ENCODE measurements at regions of chr2 and their contacts with region 1.

Region 1: DNA sequence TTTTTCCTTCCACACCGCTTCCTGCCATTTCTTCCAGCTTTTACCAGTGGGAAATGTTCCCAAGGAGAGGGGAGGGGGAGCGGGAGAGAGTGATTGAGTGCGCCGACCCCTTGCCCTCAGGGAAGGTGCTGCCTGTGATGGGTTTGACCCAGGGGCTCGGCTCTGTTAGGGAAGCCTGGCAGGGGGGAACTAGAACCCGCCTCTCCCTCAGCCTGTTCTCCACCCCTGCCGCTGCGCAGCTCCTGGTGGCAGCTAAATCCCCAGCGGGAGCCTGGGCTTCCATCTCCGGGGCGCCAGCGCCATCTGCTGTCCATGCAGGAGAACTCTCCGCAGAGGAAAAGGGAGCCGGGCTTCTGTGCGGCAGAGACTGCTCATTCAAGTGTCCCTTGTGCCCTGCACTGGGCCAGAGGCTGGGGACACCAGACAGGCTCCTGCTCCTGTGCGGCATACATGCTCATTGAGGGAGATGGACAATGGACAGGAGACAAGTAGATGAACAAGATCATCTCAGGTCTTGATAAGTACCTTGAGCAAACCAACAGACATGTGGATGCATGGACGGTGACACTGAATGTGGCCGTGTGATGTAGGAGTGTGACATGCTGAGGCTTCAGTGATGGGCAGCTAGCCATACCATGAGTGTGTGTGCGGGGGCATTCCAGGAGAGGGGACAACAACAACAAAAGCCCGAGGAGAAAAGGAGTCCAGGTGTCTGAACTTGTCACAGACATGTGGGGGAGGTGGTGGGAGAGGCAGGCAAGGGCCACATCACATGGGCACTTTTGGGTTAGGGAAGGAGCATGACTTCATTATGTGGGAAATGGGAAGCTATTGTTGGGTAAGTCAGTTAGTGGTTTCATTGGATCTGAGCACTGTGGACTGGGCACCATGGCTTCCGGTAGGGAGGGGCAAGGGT is 13.3 kb downstream of the CHPF start:
- DNase-seq: peak; percentile 84
- ATAC-seq: peak; percentile 91
- H3K4me3 ChIP-seq: no peak overlapping the region
- H3K4me3 Mint-ChIP-seq: no peak overlapping the region
- H3K27ac ChIP-seq: no peak overlapping the region
- H3K27ac Mint-ChIP-seq: no peak overlapping the region
- H3K4me1 ChIP-seq: peaks cover 4 to 5% of the 10 kb centered on the region in 2 donors
- H3K4me1 Mint-ChIP-seq: peaks cover 3% of the 10 kb centered on the region
- H3K27me3 ChIP-seq: peaks cover 0 to 53% (median 18%) of the 10 kb centered on the region in 4 experiments
- H3K27me3 Mint-ChIP-seq: peaks cover 64% of the 10 kb centered on the region
- CTCF ChIP-seq: peak; percentile 98

Region 2: DNA sequence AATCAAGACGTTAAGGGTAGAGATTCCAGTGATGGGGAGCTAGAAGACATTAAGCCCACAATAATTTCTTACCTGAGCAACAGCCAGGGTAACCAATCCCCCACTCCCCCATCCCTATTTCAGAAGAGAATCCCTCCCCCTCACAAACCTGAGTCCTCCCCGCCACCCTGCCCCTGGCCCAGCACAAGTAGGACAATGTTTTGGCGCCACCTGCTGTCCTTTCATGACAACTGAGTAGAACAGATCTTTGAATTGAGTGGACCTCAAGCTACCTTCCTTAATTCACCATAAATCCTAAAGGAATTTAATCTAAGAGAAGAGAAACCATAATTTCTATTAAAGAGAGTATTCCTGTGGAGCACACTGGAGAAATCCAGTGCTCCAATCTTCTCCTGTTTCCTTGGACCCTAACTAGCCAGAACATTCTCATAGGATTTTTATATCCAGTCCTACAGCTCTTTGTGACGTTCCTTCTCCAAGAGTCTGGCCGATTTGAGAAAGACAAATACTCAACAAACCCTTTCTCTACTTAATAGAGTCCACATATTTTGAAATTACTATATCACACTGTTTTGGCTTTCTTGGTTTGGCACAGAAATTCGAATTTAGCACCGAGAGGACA is 410.8 kb before region 1 on chr2:
- CTCF ChIA-PET with region 1: no interaction called
- POLR2A ChIA-PET with region 1: no interaction called
- intact Hi-C with region 1: no loop called
- DNase-seq: peak; percentile 61
- ATAC-seq: no peak
- H3K4me3 ChIP-seq: no peak overlapping the region
- H3K4me3 Mint-ChIP-seq: no peak overlapping the region
- H3K27ac ChIP-seq: no peak overlapping the region
- H3K27ac Mint-ChIP-seq: no peak overlapping the region
- H3K4me1 ChIP-seq: no peaks in the 10 kb centered on the region
- H3K4me1 Mint-ChIP-seq: peaks cover 2% of the 10 kb centered on the region
- H3K27me3 ChIP-seq: no peaks in the 10 kb centered on the region
- H3K27me3 Mint-ChIP-seq: no peaks in the 10 kb centered on the region
- CTCF ChIP-seq: peak; percentile 74

Region 3: DNA sequence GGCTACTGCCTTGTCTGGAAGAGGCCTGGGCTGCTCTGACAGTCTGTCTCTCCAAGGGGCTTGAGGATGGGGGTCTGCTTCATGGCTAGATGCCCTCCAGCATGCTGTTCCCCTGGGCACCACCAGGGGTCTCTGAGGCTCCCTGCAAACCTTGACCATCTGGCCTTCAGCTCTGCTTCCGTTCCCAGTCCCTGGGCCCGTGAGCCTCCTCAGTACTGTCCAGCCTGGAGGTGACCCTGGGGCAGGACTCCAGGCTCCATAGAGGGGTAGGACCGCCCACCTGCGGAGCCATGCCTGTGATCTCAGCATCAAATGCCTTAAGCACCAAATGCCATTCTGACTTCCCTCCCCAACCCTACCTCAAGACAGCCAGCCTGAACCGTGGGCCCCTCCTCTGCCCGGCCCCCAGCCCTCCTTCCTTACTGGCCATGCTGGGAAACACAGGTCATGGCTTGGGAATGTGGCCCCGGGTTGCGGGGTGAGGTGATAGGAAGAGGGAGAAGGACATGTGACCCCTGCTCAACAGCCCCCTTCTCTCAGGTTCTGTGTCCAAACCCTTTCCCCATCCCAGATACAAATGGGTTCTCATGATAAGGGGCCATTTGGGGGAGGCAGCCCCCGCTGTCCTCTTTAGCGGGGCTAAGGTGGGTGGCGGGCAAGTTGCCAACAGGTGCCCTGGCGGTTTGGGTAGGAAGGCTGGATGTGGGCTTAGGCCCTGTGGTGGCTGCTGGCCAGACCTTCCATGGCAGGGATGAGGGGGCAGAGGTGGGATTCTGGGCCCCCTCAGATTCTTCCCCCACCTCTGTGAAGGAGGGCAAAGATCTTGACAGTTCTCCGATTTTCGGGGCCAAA is 70.6 kb before region 1 on chr2:
- CTCF ChIA-PET with region 1: interaction called, 146 read pairs
- POLR2A ChIA-PET with region 1: interaction called, 12 read pairs
- intact Hi-C with region 1: loop called (anchors 1 kb)
- DNase-seq: peak; percentile 58
- ATAC-seq: peak; percentile 62
- H3K4me3 ChIP-seq: no peak overlapping the region
- H3K4me3 Mint-ChIP-seq: no peak overlapping the region
- H3K27ac ChIP-seq: no peak overlapping the region
- H3K27ac Mint-ChIP-seq: no peak overlapping the region
- H3K4me1 ChIP-seq: no peaks in the 10 kb centered on the region
- H3K4me1 Mint-ChIP-seq: peaks cover 3% of the 10 kb centered on the region
- H3K27me3 ChIP-seq: peaks cover 0 to 17% (median 2%) of the 10 kb centered on the region in 4 experiments
- H3K27me3 Mint-ChIP-seq: peaks cover 21% of the 10 kb centered on the region
- CTCF ChIP-seq: peak; percentile 85

Region 4: DNA sequence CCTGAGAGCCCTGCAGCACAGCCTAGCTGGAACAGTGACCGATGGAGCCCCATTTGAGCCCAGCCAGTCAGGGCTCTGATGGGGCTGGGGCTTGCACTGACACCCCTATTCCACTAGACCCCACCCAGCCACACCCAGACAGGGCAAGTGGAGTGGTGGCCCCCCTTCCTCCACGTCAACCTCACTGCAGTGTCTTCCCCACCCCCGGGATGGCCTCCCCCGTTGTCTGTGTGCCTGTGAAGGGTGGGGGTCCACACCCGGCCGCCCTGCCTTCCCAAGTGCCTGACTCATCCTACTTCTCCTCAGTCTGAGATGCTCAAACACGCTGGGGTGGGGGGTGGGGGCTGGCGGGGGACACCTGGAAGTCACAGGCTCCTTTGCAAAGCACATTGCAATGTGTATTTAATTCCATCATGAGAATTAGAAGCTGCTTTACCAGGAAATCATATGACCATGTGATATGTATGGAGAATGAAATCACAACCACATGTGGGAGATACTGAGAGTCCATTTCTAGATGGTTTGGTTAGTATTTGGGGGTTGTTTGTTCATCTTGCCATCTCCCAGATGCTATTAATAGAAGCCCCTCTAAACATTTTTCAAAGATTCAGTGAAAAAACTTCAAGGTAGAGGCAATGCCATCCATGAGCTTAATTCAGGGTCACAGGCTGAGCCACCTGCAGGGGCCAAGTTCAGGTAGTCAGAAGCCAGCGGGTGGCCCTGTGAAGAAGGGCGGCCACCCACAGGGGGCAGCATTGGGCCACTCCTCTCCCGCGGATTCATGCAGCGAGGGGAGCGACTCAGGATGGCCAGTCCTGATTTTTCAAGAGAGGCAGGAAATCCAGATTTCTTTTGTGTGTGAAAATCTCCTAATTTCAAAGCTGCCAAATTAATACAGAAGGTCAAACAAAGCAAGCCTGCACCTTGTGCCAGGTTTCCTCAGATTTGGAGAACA is 54.3 kb before region 1 on chr2:
- CTCF ChIA-PET with region 1: interaction called, 17 read pairs
- POLR2A ChIA-PET with region 1: no interaction called
- intact Hi-C with region 1: no loop called
- DNase-seq: peak; percentile 43
- ATAC-seq: no peak
- H3K4me3 ChIP-seq: no peak overlapping the region
- H3K4me3 Mint-ChIP-seq: no peak overlapping the region
- H3K27ac ChIP-seq: no peak overlapping the region
- H3K27ac Mint-ChIP-seq: no peak overlapping the region
- H3K4me1 ChIP-seq: no peaks in the 10 kb centered on the region
- H3K4me1 Mint-ChIP-seq: peaks cover 4% of the 10 kb centered on the region
- H3K27me3 ChIP-seq: peaks cover 0 to 16% (median 3%) of the 10 kb centered on the region in 4 experiments
- H3K27me3 Mint-ChIP-seq: peaks cover 51% of the 10 kb centered on the region
- CTCF ChIP-seq: peak; percentile 39

Region 5: GRCh38 chr2:219509780-219510511 is 20.4 kb before region 1 on chr2:
- CTCF ChIA-PET with region 1: interaction called, 15 read pairs
- POLR2A ChIA-PET with region 1: no interaction called
- intact Hi-C with region 1: no loop called
- DNase-seq: peak; percentile 57
- ATAC-seq: peak; percentile 72
- H3K4me3 ChIP-seq: peak overlapping the region in 1 of 5 experiments; percentile 8
- H3K4me3 Mint-ChIP-seq: peak overlapping the region; percentile 69
- H3K27ac ChIP-seq: no peak overlapping the region
- H3K27ac Mint-ChIP-seq: no peak overlapping the region
- H3K4me1 ChIP-seq: peaks cover 15 to 30% of the 10 kb centered on the region in 2 donors
- H3K4me1 Mint-ChIP-seq: peaks cover 26% of the 10 kb centered on the region
- H3K27me3 ChIP-seq: peaks cover 0 to 68% (median 19%) of the 10 kb centered on the region in 4 experiments
- H3K27me3 Mint-ChIP-seq: peaks cover 48% of the 10 kb centered on the region
- CTCF ChIP-seq: peak; percentile 59

Region 6: DNA sequence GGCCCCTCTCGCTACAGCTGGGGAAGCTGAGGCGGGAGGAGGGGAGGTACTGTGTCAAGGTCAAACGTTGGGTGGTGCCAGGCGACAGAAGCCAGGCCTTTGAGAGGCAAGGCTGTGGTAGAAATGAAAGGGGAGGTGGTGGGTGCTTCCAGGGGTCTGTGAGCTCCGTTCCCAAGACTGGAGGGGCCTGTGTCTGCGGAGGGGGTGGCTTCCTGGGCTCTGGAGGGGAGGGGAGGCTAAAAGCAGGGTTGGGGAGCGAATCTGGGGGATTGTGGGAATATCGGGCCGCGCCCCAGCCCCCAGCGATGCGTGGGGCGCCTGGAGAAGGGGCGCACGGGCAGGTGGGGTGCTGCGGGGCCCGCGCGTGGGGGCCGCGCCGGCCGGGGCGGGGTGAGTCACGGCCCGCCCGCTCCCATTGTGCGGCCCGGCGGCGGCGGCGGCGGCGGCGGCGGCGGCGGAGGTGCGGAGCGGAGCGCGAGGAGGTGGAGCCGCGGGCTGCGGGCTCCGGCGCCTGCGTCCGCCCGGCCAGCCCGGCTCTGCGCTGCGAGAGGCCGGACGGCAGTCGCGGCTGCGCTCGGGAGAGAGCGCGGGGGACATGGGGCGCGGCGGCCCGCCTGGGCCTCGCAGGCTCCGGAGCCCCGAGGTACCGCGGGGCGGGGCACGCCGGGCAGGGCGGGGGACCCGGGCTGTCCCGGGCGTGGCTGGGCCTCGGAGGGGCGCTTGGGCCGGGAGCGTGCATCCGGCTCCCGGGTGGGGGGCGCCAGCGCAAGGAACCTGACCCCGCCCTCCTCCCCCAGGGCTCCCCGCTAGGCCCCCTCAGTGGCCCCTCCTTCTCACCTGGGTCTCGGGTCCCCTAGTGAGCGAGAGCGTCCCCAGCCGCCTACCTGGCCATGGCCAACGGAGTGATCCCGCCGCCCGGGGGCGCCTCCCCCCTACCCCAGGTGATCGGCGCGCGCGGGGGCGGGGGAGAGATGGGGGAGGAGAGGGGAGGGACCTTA is 97.1 kb after region 1 on chr2 and contains the start of gene SLC4A3:
- CTCF ChIA-PET with region 1: no interaction called
- POLR2A ChIA-PET with region 1: no interaction called
- intact Hi-C with region 1: no loop called
- DNase-seq: peak; percentile 35
- ATAC-seq: peak; percentile 49
- H3K4me3 ChIP-seq: peak within 1 kb of the TSS in 3 of 5 experiments; percentile 20 to 51 (median 32)
- H3K4me3 Mint-ChIP-seq: peak within 1 kb of the TSS; percentile 79
- H3K27ac ChIP-seq: no peak within 1 kb of the TSS
- H3K27ac Mint-ChIP-seq: peak within 1 kb of the TSS; percentile 22
- H3K4me1 ChIP-seq: peaks cover 10 to 20% of the 10 kb centered on the region in 2 donors
- H3K4me1 Mint-ChIP-seq: peaks cover 10% of the 10 kb centered on the region
- H3K27me3 ChIP-seq: peaks cover 0 to 44% (median 24%) of the 10 kb centered on the region in 4 experiments
- H3K27me3 Mint-ChIP-seq: peaks cover 51% of the 10 kb centered on the region
- CTCF ChIP-seq: no peak
- total RNA-seq, gene SLC4A3: not detected in 2 replicates

Measured in B cell (primary cell).